ENCODE measurements at regions of chr17 and their contacts with region 1.

Region 1: GRCh38 chr17:74864866-74865395 is 5.2 kb upstream of the GRIN2C start:
- DNase-seq: peak; percentile 62 to 87
- H3K4me3 ChIP-seq: no peak overlapping the region
- H3K27ac ChIP-seq: no peak overlapping the region
- H3K4me1 ChIP-seq: peaks cover 0 to 26% (median 22%) of the 10 kb centered on the region in 4 donors
- H3K27me3 ChIP-seq: peaks cover 3 to 46% of the 10 kb centered on the region in 2 donors
- CTCF ChIP-seq: peak; percentile 89 to 95

Region 2: DNA sequence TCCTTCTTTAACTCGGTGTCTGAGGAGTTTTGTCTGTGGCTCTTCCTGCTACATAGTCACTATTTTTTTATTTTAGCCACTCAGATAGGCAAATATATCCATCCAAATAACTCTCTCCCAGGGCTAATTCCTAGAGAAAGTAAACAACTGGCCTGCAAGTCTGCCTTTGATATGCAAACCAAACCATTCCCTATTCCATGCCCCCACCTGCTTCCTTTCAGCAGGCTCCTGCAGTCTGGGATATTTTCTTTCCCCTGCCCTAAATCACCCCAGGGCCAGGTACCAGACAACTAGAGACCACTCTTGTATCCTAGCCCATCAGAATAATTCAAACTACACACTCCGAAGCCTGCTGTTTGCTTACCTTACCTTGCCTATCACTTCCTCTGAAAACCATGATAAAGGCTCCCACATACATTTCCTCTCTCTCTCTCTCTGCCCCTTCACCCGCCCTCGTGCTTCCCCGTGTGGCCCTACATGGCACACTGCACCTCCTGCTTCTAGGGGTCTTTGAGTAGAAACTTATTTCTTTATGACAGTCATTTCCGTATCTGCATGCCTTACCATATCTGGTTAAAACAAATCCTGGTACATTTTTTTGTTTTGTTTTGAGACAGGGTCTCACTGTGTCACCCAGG is 305.9 kb before region 1 on chr17:
- intact Hi-C with region 1: no loop called
- DNase-seq: no peak
- H3K4me3 ChIP-seq: no peak overlapping the region
- H3K27ac ChIP-seq: no peak overlapping the region
- H3K4me1 ChIP-seq: no peaks in the 10 kb centered on the region
- H3K27me3 ChIP-seq: peaks cover 0 to 12% of the 10 kb centered on the region in 2 donors
- CTCF ChIP-seq: no peak

Region 3: GRCh38 chr17:74748529-74749365 is 116.2 kb before region 1 on chr17 and contains the start of gene NHERF1:
- intact Hi-C with region 1: loop called (anchors 2 kb)
- DNase-seq: peak; percentile 95 to 97
- H3K4me3 ChIP-seq: peak within 1 kb of the TSS; percentile 95 to 98
- H3K27ac ChIP-seq: peak within 1 kb of the TSS; percentile 80 to 89
- H3K4me1 ChIP-seq: peaks cover 0 to 43% (median 36%) of the 10 kb centered on the region in 4 donors
- H3K27me3 ChIP-seq: no peaks in the 10 kb centered on the region
- CTCF ChIP-seq: no peak

Region 4: GRCh38 chr17:74790161-74791054 is 74.5 kb before region 1 on chr17:
- intact Hi-C with region 1: loop called (anchors 5 kb)
- DNase-seq: no peak
- H3K4me3 ChIP-seq: no peak overlapping the region
- H3K27ac ChIP-seq: no peak overlapping the region
- H3K4me1 ChIP-seq: no peaks in the 10 kb centered on the region
- H3K27me3 ChIP-seq: no peaks in the 10 kb centered on the region
- CTCF ChIP-seq: no peak

Region 5: GRCh38 chr17:75012346-75013091 is 147.6 kb after region 1 on chr17 and contains the start of gene MRPL58:
- intact Hi-C with region 1: no loop called
- DNase-seq: peak; percentile 69 to 85
- H3K4me3 ChIP-seq: peak within 1 kb of the TSS; percentile 89 to 93
- H3K27ac ChIP-seq: peak within 1 kb of the TSS; percentile 85 to 87
- H3K4me1 ChIP-seq: peaks cover 0 to 25% (median 15%) of the 10 kb centered on the region in 4 donors
- H3K27me3 ChIP-seq: no peaks in the 10 kb centered on the region
- CTCF ChIP-seq: peak; percentile 54 to 55